Dendritic cell treated with granulocyte-macrophage colony-stimulating factor and Interleukin-4, amounts not matched to agents 40 ng/mL and 50 ng/mL, for 4 days (primary cell): ENCODE measurements at regions of chr12 and their contacts with region 1.

Region 1: DNA sequence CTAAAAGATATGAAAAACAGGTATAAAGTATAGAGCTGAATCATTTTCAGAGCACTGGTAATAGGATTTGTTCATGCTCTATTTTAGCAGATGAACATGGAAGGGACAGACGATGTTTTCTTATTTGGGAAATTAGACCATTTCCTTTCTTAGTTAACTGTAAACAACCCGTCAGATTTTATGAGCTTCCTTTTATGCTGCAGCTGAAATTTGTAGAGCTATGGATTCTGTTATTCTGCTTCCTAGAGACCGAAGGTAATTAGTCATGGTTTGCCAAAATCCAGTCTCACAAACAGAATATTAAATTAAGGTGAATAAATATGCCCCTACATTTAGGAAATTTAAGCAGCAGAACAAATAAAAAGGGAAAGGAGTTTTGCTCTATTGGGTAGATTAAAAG is 180.2 kb upstream of the SYT1 start:
- H3K4me3 Mint-ChIP-seq: no peak overlapping the region
- H3K27ac Mint-ChIP-seq: no peak overlapping the region
- H3K4me1 Mint-ChIP-seq: no peaks in the 10 kb centered on the region
- H3K27me3 Mint-ChIP-seq: no peaks in the 10 kb centered on the region

Region 2: DNA sequence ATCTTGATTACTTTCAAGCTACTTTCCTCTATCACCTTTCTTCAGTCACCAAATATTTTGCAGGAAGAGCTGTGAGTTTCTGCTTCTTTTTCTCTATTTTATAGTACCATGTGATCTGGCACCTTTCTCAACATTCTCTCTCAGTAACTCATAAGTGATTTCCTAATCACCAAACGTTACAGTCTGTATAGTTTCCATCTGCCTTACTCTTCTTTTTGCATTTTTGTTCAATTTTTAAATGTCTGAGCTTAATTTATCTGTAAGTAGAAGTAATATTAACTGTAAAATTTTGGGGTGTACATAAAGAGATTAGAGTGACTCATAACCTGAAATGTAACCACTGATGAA is 242.0 kb before region 1 on chr12:
- intact Hi-C with region 1: no loop called
- H3K4me3 Mint-ChIP-seq: no peak overlapping the region
- H3K27ac Mint-ChIP-seq: no peak overlapping the region
- H3K4me1 Mint-ChIP-seq: peaks cover 7% of the 10 kb centered on the region
- H3K27me3 Mint-ChIP-seq: no peaks in the 10 kb centered on the region

Region 3: DNA sequence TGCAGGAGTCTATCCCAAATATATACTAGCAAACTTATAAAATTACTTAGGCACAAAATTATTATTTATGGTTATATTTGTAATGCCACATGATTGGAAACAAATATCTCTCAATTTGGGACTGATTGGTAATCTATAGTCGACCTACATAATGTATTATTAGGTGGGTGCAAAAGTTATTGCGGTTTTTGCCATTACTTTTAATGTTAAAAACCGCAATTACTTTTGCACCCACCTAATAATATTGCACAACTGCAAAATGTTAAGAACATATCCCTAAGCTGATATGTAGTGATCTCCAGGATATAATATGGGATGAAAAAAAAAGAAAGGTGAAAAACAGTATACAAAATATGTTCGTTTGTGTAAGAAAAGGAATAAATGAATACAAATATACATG is 98.3 kb after region 1 on chr12:
- intact Hi-C with region 1: loop called (anchors 1 kb)
- H3K4me3 Mint-ChIP-seq: no peak overlapping the region
- H3K27ac Mint-ChIP-seq: no peak overlapping the region
- H3K4me1 Mint-ChIP-seq: no peaks in the 10 kb centered on the region
- H3K27me3 Mint-ChIP-seq: no peaks in the 10 kb centered on the region